HCT116 (cell line): ENCODE measurements at regions of chr1 and their contacts with region 1.

Region 1: DNA sequence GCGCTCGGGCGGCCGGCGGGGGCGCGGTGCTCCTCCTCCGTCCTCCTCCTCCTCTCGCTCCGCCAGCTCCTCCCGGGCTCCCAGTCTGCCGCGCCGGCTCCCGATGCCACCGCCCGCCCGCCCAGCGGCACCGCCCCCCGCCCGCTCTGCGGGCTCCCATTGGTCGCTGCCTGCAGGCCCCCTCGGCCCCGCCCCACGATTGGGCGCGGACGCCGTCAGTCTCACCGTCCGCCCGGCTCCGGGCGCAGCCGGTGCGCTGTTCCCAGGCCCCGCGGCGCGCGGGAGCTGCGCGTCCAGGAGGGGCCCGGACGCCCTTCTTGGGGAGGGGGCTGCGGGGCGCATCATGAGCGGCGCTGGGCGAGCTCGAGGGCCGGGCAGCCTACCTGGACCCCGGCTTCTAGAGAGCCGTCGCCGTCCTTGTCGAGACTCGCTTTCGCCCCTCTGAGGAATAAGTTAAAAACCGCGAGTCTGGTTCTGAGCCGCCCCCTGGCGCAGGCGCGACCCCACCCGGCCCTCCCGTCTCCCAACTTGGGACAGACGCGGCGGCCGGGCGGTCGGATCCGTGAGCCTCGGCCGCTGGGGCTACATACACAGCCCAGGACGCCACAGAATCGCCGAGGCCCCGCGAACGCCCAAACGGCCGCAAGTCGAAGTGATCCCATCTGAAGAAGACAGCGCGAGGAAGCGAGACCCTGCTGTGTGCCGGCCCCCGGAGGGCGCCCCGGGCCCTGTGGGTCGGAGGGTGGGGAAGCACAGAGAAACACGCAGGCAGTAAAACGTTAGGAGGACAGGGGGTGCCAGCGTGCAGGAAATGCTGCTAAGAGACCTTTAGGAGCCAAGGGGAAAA is at the start of gene SIPA1L2:
- DNase-seq: peak; percentile 66
- ATAC-seq: peak; percentile 95
- H3K4me3 ChIP-seq: peak within 1 kb of the TSS; percentile 52 to 63
- H3K27ac ChIP-seq: peak within 1 kb of the TSS; percentile 40
- H3K4me1 ChIP-seq: peaks cover 19 to 37% of the 10 kb centered on the region in 2 experiments; a peak in 3 of 4 replicates
- H3K27me3 ChIP-seq: no peaks in the 10 kb centered on the region
- CTCF ChIP-seq: peak; percentile 41 to 77 (median 50)
- POLR2A ChIP-seq: no peak
- RAD21 ChIP-seq: peak; percentile 79
- total RNA-seq, gene SIPA1L2: 12.5 TPM

Region 2: GRCh38 chr1:231724876-231725724 is 905.2 kb before region 1 on chr1:
- CTCF ChIA-PET with region 1: interaction called, 3 read pairs
- POLR2A ChIA-PET with region 1: no interaction called
- RAD21 ChIA-PET with region 1: no interaction called
- intact Hi-C with region 1: loop called (anchors 10 kb)
- DNase-seq: peak; percentile 76
- ATAC-seq: peak; percentile 99
- H3K4me3 ChIP-seq: no peak overlapping the region
- H3K27ac ChIP-seq: no peak overlapping the region
- H3K4me1 ChIP-seq: no peaks in the 10 kb centered on the region
- H3K27me3 ChIP-seq: no peaks in the 10 kb centered on the region
- CTCF ChIP-seq: peak; percentile 59 to 88 (median 79)
- POLR2A ChIP-seq: no peak
- RAD21 ChIP-seq: peak; percentile 79

Region 3: GRCh38 chr1:231866392-231867331 is 763.6 kb before region 1 on chr1:
- CTCF ChIA-PET with region 1: interaction called, 29 read pairs
- POLR2A ChIA-PET with region 1: no interaction called
- RAD21 ChIA-PET with region 1: interaction called, 4 to 6 read pairs
- intact Hi-C with region 1: loop called (anchors 2 kb)
- DNase-seq: peak; percentile 23
- ATAC-seq: peak; percentile 77
- H3K4me3 ChIP-seq: no peak overlapping the region
- H3K27ac ChIP-seq: no peak overlapping the region
- H3K4me1 ChIP-seq: no peaks in the 10 kb centered on the region
- H3K27me3 ChIP-seq: no peaks in the 10 kb centered on the region
- CTCF ChIP-seq: peak; percentile 70 to 93 (median 76); a peak in 5 of 6 replicates
- POLR2A ChIP-seq: no peak
- RAD21 ChIP-seq: peak; percentile 93

Region 4: DNA sequence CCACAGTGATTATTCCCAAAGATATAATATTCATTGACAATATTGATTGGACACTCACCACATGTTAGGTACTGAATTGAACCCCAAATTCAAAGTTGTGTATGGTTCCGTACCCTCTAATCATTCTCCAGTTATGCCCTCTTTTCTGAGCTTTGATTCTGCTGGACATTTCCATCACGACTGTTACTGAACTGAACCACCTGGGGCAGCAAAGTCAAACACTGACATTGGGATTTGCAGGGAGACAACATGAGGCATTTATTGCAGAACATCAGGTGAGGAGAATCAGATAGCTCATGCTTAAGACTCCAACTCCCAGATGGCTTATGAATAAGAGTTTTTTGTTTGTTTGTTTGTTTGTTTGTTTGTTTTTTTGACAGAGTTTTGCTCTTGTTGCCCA is 582.8 kb before region 1 on chr1:
- CTCF ChIA-PET with region 1: interaction called, 6 read pairs
- POLR2A ChIA-PET with region 1: no interaction called
- RAD21 ChIA-PET with region 1: no interaction called
- intact Hi-C with region 1: loop called (anchors 5 kb)
- DNase-seq: peak; percentile 13
- ATAC-seq: peak; percentile 62
- H3K4me3 ChIP-seq: no peak overlapping the region
- H3K27ac ChIP-seq: no peak overlapping the region
- H3K4me1 ChIP-seq: no peaks in the 10 kb centered on the region
- H3K27me3 ChIP-seq: peaks cover 12% of the 10 kb centered on the region
- CTCF ChIP-seq: peak in 2 of 3 experiments; percentile 39 to 50; a peak in 4 of 6 replicates
- POLR2A ChIP-seq: no peak
- RAD21 ChIP-seq: peak; percentile 48

Region 5: GRCh38 chr1:232211149-232211548 is 419.1 kb before region 1 on chr1:
- CTCF ChIA-PET with region 1: interaction called, 8 read pairs
- POLR2A ChIA-PET with region 1: no interaction called
- RAD21 ChIA-PET with region 1: no interaction called
- intact Hi-C with region 1: loop called (anchors 10 kb)
- DNase-seq: peak; percentile 23
- ATAC-seq: peak; percentile 99
- H3K4me3 ChIP-seq: no peak overlapping the region
- H3K27ac ChIP-seq: no peak overlapping the region
- H3K4me1 ChIP-seq: no peaks in the 10 kb centered on the region
- H3K27me3 ChIP-seq: no peaks in the 10 kb centered on the region
- CTCF ChIP-seq: peak in 2 of 3 experiments; percentile 71 to 80; a peak in 4 of 6 replicates
- POLR2A ChIP-seq: no peak
- RAD21 ChIP-seq: no peak

Region 6: DNA sequence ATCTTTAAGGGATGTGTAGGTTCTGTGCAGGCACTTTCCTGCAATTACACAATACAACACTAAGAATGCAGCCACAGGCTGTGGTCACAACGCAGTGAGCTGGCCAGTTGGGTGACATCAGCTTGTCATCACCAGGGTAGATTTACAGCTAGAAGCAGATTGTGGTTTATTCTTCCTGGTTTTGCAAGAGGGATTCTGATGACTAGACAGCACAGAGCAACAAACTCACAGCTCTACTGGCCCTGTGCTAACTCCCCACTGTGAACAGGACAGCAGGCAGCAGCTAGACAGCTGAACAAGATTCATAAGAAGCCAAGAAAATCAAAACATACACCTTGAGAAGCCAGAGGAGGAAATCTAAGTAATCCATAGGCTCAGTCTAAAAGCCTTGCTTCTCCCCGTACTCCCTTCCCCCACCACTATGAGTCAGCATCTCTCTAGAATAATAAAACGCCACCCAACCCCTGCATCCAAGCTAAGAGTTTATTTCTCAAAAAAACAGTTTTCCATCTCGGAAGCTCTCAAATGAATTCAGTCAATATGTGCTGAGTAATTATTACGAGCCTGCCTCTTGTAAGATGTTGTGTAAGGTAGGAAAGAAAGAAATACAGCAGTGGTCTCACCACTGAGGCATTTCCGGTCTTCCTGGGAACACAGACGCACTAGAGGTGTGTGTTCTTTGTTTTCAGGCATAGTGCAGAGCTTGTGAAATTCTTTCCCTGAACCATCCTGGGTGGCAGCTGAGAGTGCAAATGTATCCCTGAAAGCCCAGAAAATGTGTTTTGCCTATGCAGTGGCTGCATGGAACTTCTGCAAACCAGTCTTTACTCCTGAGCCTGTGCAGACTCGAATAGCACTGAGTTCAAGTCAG is 483.0 kb after region 1 on chr1:
- CTCF ChIA-PET with region 1: no interaction called
- POLR2A ChIA-PET with region 1: no interaction called
- RAD21 ChIA-PET with region 1: no interaction called
- intact Hi-C with region 1: loop called (anchors 5 kb)
- DNase-seq: peak; percentile 94
- ATAC-seq: peak; percentile 89
- H3K4me3 ChIP-seq: peak overlapping the region; percentile 30 to 54
- H3K27ac ChIP-seq: peak overlapping the region; percentile 87
- H3K4me1 ChIP-seq: peaks cover 30 to 38% of the 10 kb centered on the region in 2 experiments
- H3K27me3 ChIP-seq: no peaks in the 10 kb centered on the region
- CTCF ChIP-seq: no peak
- POLR2A ChIP-seq: no peak
- RAD21 ChIP-seq: no peak; the same call in none of the 2 replicates